ENCODE measurements at regions of chr4 and their contacts with region 1.

Region 1: DNA sequence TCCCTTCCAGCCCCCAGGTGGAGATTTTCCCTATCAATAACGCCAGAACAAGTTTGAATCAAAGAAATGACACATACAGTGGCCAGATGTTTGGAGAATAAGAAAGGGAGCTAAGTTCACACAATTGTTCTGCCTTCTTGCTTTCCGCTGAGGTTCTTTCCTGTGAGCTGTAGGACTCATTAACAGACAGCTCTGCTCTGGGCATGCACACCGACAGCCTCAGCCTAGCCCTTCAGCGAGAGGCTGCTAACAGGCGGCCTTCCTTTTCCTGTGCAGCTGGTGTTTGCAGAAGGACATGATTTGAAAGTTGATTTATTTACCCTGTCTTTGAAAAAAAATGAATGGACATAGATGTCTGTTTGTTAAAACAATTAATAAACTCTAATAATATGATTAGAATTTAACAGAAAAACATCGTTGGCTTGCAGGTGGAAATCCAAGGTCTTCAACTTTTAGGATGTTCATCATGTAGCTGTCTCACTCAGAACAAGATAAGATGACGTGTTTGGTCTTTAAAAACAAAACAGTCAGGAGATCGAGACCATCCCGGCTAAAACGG is 183.3 kb downstream of the KDR start:
- DNase-seq: no peak
- H3K4me3 ChIP-seq: no peak overlapping the region
- H3K27ac ChIP-seq: no peak overlapping the region
- H3K4me1 ChIP-seq: no peaks in the 10 kb centered on the region
- H3K27me3 ChIP-seq: no peaks in the 10 kb centered on the region
- CTCF ChIP-seq: no peak
- POLR2A ChIP-seq: no peak

Region 2: GRCh38 chr4:54959652-54960116 is 17.6 kb after region 1 on chr4:
- intact Hi-C with region 1: loop called (anchors 2 kb)
- DNase-seq: no peak
- H3K4me3 ChIP-seq: no peak overlapping the region
- H3K27ac ChIP-seq: no peak overlapping the region
- H3K4me1 ChIP-seq: no peaks in the 10 kb centered on the region
- H3K27me3 ChIP-seq: no peaks in the 10 kb centered on the region
- CTCF ChIP-seq: no peak
- POLR2A ChIP-seq: no peak

Region 3: GRCh38 chr4:56164907-56165306 is 1222.8 kb after region 1 on chr4:
- intact Hi-C with region 1: loop called (anchors 5 kb)
- DNase-seq: no peak
- H3K4me3 ChIP-seq: no peak overlapping the region
- H3K27ac ChIP-seq: no peak overlapping the region
- H3K4me1 ChIP-seq: no peaks in the 10 kb centered on the region
- H3K27me3 ChIP-seq: no peaks in the 10 kb centered on the region
- CTCF ChIP-seq: no peak
- POLR2A ChIP-seq: no peak